ENCODE measurements at regions of chr12 and their contacts with region 1.

Region 1: GRCh38 chr12:7995266-7995963 is 37.1 kb upstream of the FOXJ2 start:
- DNase-seq: peak; percentile 89 to 92
- ATAC-seq: peak; percentile 100
- H3K4me3 ChIP-seq: no peak overlapping the region
- H3K27ac ChIP-seq: no peak overlapping the region
- H3K4me1 ChIP-seq: no peaks in the 10 kb centered on the region
- H3K27me3 ChIP-seq: no peaks in the 10 kb centered on the region

Region 2: DNA sequence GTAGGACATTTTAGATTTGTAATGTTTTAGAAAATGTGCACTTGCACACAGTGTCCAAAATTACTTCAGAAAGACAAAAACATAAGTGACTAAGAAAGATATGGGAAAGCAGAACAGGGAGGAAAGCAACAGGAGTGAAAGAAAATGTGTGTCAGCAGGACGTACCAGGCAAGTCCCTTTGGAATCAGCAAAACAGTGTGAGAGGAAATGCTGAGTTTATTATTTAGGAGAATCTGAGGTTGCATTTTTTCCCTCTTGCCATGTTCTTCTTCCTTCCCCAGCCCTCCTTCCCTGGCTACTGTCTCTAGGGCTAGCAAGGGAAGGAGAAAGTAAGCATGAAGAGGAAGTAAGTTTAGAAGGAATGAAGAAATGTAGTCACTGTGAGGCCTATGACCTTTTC is 424.2 kb before region 1 on chr12:
- intact Hi-C with region 1: no loop called
- DNase-seq: no peak
- ATAC-seq: no peak
- H3K4me3 ChIP-seq: no peak overlapping the region
- H3K27ac ChIP-seq: no peak overlapping the region
- H3K4me1 ChIP-seq: no peaks in the 10 kb centered on the region
- H3K27me3 ChIP-seq: no peaks in the 10 kb centered on the region

Region 3: DNA sequence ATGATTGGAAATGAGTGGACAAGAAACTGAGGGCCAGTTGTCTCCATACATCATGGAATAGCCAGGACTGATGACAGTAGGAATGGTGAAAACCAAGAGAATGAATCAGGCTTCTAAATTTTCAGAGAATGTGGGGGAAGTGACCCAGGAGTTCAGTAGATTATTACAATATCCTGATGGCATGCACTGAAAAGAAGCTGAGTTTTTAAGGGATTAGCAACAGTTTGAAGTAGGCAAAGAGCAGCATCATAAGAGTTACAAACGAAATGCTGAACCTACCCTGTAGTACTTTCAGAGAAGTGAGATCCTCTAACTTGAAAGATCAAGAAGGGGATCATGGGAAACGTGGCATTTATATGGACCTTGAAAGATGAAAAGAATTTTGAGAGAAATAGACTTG is 135.9 kb before region 1 on chr12:
- intact Hi-C with region 1: loop called (anchors 1 to 2 kb)
- DNase-seq: no peak
- ATAC-seq: no peak
- H3K4me3 ChIP-seq: no peak overlapping the region
- H3K27ac ChIP-seq: no peak overlapping the region
- H3K4me1 ChIP-seq: no peaks in the 10 kb centered on the region
- H3K27me3 ChIP-seq: no peaks in the 10 kb centered on the region

Region 4: GRCh38 chr12:7933255-7933729 is 62.1 kb before region 1 on chr12:
- intact Hi-C with region 1: loop called (anchors 2 kb)
- DNase-seq: peak; percentile 73 to 83
- ATAC-seq: peak; percentile 86
- H3K4me3 ChIP-seq: no peak overlapping the region
- H3K27ac ChIP-seq: no peak overlapping the region
- H3K4me1 ChIP-seq: peaks cover 0 to 2% of the 10 kb centered on the region in 2 donors
- H3K27me3 ChIP-seq: no peaks in the 10 kb centered on the region

Measured in aorta (tissue), 5 donors.